Endothelial cell of umbilical vein (primary cell): ENCODE measurements at regions of chr5 and their contacts with region 1.

Region 1: DNA sequence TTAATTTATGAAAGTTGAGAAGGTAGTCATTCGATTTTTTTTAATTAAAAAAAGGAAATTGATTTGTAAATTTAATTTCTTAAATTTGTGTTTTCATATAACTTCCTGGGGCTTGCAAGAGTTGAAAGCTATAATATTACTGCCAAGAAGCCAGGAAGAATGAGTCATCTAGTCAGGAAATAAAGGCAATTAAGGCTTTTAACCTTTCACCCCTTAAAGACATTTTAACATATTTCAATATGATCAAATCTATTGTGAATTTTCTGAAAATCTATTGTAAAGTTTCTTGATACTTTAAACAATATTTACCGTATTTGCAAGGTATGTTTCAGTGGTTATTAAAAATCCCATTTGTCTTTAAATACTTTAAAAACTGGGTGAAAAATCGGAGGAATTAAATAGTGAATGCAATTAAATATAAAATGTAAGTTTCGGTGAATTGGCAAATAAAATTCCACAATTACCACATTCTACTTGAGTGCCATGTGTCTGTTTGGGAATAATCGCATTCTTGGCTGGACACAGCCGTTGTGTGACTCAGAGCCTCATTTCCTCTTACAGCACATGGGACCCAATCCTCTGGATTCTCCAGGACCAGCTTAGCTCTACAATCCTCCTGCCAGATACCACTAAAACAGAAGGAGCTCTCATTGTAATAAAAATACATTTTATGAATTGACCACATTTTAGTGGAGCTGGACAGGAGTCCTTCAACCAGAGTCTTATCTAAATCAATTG is 310.7 kb downstream of the HCN1 start:
- DNase-seq: peak; percentile 93
- H3K4me3 ChIP-seq: peak overlapping the region in 2 of 3 experiments; percentile 8 to 15
- H3K27ac ChIP-seq: peak overlapping the region; percentile 88
- H3K4me1 ChIP-seq: peaks cover 29% of the 10 kb centered on the region
- H3K27me3 ChIP-seq: no peaks in the 10 kb centered on the region
- CTCF ChIP-seq: no peak
- POLR2A ChIP-seq: no peak

Region 2: GRCh38 chr5:44875661-44876605 is 509.6 kb before region 1 on chr5:
- CTCF ChIA-PET with region 1: no interaction called
- POLR2A ChIA-PET with region 1: no interaction called
- dilution Hi-C with region 1: no loop called
- intact Hi-C with region 1: loop called (anchors 1 kb)
- DNase-seq: peak; percentile 89
- H3K4me3 ChIP-seq: no peak overlapping the region
- H3K27ac ChIP-seq: peak overlapping the region; percentile 70
- H3K4me1 ChIP-seq: peaks cover 13% of the 10 kb centered on the region
- H3K27me3 ChIP-seq: no peaks in the 10 kb centered on the region
- CTCF ChIP-seq: no peak
- POLR2A ChIP-seq: no peak

Region 3: GRCh38 chr5:45399041-45399440 is 13.6 kb after region 1 on chr5:
- CTCF ChIA-PET with region 1: interaction called, 10 read pairs
- POLR2A ChIA-PET with region 1: no interaction called
- dilution Hi-C with region 1: no loop called
- intact Hi-C with region 1: no loop called
- DNase-seq: no peak
- H3K4me3 ChIP-seq: no peak overlapping the region
- H3K27ac ChIP-seq: no peak overlapping the region
- H3K4me1 ChIP-seq: no peaks in the 10 kb centered on the region
- H3K27me3 ChIP-seq: no peaks in the 10 kb centered on the region
- CTCF ChIP-seq: no peak
- POLR2A ChIP-seq: no peak